ENCODE measurements at regions of chr12 and their contacts with region 1.

Region 1: DNA sequence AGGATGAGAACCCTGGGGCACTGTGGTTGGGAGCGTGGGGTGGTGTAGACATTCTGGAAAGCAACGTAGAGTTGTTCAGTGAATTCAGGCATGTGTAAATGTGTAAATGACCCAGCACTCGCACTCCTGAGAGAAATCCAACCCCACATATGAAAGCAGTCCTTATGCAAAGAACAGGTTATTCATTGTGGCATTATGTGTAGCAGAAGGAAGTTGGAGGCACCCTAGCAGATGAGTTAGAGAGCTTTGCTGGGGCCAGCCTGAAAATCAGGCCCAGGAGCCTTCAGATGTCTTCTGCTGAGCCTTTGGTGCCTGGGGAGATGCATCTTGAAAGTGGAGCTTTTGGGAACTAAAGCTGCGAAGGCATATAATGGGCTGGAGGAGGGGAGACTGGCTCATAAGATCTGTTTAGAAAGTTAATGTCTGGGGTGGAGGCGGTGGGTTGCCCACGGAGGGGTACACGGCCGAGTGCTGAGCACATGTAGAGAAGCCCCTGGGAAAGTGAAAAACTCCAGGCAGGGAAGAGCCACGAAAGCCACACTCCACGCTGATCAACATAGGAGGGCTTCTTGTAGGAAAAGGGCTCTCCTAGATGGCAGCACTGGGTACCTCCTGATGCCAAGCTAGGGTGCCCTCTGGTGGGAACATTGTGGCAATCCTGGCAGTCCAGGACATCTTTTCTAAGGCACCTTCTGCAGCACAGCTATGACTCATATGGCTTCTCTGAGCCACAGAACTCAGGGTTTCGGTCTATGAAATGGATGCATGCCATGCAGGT is 6.0 kb upstream of the KRT83 start:
- DNase-seq: peak; percentile 98
- ATAC-seq: peak; percentile 98
- H3K4me3 ChIP-seq: no peak overlapping the region
- H3K27ac ChIP-seq: peak overlapping the region; percentile 76
- H3K4me1 ChIP-seq: peaks cover 15% of the 10 kb centered on the region
- H3K27me3 ChIP-seq: no peaks in the 10 kb centered on the region
- CTCF ChIP-seq: peak; percentile 99

Region 2: GRCh38 chr12:52156736-52157565 is 170.3 kb before region 1 on chr12:
- CTCF ChIA-PET with region 1: interaction called, 4 read pairs
- POLR2A ChIA-PET with region 1: no interaction called
- intact Hi-C with region 1: loop called (anchors 1 kb)
- DNase-seq: peak; percentile 86
- ATAC-seq: peak; percentile 55
- H3K4me3 ChIP-seq: no peak overlapping the region
- H3K27ac ChIP-seq: no peak overlapping the region
- H3K4me1 ChIP-seq: peaks cover 34% of the 10 kb centered on the region
- H3K27me3 ChIP-seq: no peaks in the 10 kb centered on the region
- CTCF ChIP-seq: peak; percentile 98

Region 3: GRCh38 chr12:52203075-52203921 is 123.9 kb before region 1 on chr12:
- CTCF ChIA-PET with region 1: no interaction called
- POLR2A ChIA-PET with region 1: interaction called, 16 read pairs
- intact Hi-C with region 1: no loop called
- DNase-seq: peak; percentile 80
- ATAC-seq: peak; percentile 55
- H3K4me3 ChIP-seq: no peak overlapping the region
- H3K27ac ChIP-seq: peak overlapping the region; percentile 44
- H3K4me1 ChIP-seq: peaks cover 54% of the 10 kb centered on the region
- H3K27me3 ChIP-seq: no peaks in the 10 kb centered on the region
- CTCF ChIP-seq: no peak

Region 4: DNA sequence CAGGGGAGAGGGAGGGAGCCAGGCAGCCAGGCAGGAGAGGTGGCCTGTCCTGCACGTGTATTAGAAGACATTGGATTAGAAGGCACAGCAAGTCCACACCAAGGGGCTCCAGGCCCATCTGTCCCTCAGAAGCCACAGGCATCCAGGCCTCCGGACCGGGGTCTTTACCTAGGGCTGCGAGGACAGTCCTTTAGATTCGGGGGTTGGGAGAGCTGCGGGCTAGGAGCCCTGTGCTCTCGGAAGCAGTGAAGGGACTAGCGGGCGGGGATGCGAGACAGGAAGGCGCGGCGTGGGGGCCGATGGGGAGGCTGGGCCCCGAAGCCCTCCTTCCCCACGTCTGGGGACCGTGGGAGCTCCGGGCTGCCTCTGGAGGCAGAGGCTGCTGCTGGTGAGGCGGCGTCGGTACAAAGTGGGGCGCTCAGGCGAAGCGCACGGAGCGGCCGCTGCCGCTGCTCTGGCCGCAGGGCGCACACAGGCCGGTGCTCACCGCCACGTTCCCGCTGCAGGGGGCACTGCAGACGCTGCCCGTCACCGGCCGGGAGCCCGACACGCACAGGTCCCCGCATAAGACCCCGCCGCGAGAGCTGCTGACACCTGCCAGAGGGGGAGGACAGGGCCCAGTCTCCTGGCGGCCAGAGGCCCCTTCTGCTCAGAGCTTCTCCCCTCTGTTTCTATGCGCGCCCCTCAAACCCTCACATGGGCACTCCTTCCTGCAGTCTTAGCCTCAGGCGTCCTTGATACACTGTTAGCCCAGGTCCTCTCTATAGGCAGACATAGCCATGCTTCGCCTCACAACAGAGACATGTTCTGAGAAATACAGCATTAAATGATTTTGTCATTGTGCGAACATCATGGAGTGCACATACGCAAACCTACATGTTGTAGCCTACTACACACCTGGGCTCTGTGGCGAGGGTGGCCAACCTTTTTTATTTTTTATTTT is 76.9 kb before region 1 on chr12:
- CTCF ChIA-PET with region 1: interaction called, 3 read pairs
- POLR2A ChIA-PET with region 1: no interaction called
- intact Hi-C with region 1: loop called (anchors 5 kb)
- DNase-seq: peak; percentile 35
- ATAC-seq: no peak
- H3K4me3 ChIP-seq: no peak overlapping the region
- H3K27ac ChIP-seq: peak overlapping the region; percentile 96
- H3K4me1 ChIP-seq: peaks cover 39% of the 10 kb centered on the region
- H3K27me3 ChIP-seq: no peaks in the 10 kb centered on the region
- CTCF ChIP-seq: no peak

Measured in PC-3 (cell line).